A549 (cell line): ENCODE measurements at regions of chr4 and their contacts with region 1.

Region 1: DNA sequence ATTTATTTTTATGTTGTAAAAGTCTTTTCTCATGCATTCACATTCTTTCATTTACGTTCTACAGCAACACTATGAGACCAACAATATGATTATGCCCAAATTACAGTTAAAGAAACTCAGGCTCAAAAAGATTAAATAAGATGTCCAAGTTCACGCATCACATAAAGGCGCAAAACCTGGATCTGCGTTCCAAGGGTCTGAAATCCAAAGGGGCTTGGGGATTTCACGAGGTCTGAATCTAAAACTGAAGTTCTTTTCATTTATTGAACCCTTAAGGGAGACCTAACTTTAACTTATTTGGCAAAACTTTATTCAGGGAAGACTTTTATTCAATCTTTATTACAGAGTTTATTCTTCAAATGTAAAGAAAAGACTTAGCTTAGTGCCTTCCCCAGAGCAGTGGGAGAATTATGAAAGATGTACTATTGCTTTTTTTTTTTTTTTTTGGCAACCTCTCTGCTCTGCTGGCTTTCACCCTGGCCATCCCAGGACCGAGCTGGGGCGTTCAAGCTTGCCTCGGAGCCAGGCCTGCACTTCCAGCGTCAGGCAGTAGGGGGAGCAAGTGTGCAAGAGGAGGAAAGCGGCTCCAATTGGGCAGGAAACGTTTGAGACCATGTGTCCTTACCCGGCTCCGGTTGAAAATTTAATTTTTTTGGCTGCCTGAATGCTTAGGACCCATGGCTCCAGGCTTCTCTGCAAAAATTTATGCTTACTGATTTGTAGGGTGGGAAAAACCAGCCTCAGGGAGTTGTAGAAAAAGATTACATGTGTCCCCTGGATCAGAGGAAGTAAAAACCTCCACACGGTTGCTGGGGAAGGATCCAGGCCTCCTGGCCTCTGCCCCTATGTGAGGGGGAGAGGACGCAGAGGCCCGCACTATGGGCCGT is 344.3 kb upstream of the KLF3 start:
- DNase-seq: peak; percentile 71 to 85
- ATAC-seq: peak; percentile 69 to 84
- H3K4me3 ChIP-seq: no peak overlapping the region
- H3K27ac ChIP-seq: peak overlapping the region; percentile 78 to 89
- H3K4me1 ChIP-seq: peaks cover 26% of the 10 kb centered on the region
- CTCF ChIP-seq: peak; percentile 69
- EP300 ChIP-seq: no peak
- POLR2A ChIP-seq: no peak
- RAD21 ChIP-seq: peak; percentile 78 to 84

Region 2: GRCh38 chr4:37977471-37978247 is 342.0 kb before region 1 on chr4:
- CTCF ChIA-PET with region 1: no interaction called
- POLR2A ChIA-PET with region 1: no interaction called
- DNase-seq: peak; percentile 37 to 61
- ATAC-seq: peak; percentile 91 to 92
- H3K4me3 ChIP-seq: peak overlapping the region; percentile 74
- H3K27ac ChIP-seq: peak overlapping the region; percentile 71 to 96
- H3K4me1 ChIP-seq: peaks cover 10% of the 10 kb centered on the region; the same call in 2 of the 3 replicates
- CTCF ChIP-seq: peak; percentile 60
- EP300 ChIP-seq: no peak
- POLR2A ChIP-seq: no peak
- RAD21 ChIP-seq: peak; percentile 14 to 45; a peak in 3 of 5 replicates

Region 3: DNA sequence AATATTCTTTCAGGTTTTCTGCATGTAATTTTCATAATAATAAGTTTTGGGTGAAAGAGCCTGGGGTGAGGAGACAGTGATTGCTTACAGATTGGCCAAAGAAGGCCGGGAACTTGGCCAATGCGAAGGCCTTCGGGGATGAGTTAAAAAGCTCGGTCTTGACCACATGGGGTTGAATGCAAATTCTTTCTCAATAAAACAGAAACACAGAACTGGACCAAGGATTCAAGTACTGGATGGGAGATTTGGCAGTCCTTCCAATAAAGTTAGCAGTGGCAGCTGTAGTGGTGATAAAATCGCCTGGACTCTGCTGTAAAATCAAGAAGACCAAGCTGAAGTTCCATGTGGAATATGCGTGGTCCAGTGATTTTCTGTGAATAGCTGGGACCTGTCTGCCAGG is 62.1 kb after region 1 on chr4:
- CTCF ChIA-PET with region 1: no interaction called
- POLR2A ChIA-PET with region 1: interaction called, 12 read pairs
- DNase-seq: no peak
- ATAC-seq: no peak
- H3K4me3 ChIP-seq: no peak overlapping the region
- H3K27ac ChIP-seq: no peak overlapping the region
- H3K4me1 ChIP-seq: peaks cover 23% of the 10 kb centered on the region
- CTCF ChIP-seq: no peak
- EP300 ChIP-seq: no peak
- POLR2A ChIP-seq: no peak
- RAD21 ChIP-seq: no peak

Region 4: GRCh38 chr4:38654273-38654672 is 334.6 kb after region 1 on chr4:
- CTCF ChIA-PET with region 1: no interaction called
- POLR2A ChIA-PET with region 1: no interaction called
- DNase-seq: no peak
- ATAC-seq: no peak
- H3K4me3 ChIP-seq: no peak overlapping the region
- H3K27ac ChIP-seq: no peak overlapping the region
- H3K4me1 ChIP-seq: no peaks in the 10 kb centered on the region
- CTCF ChIP-seq: no peak
- EP300 ChIP-seq: no peak
- POLR2A ChIP-seq: no peak
- RAD21 ChIP-seq: no peak

Region 5: GRCh38 chr4:38667085-38667893 is 347.6 kb after region 1 on chr4:
- CTCF ChIA-PET with region 1: interaction called, 24 read pairs
- POLR2A ChIA-PET with region 1: interaction called, 21 read pairs
- DNase-seq: peak; percentile 89 to 97
- ATAC-seq: peak; percentile 65 to 86
- H3K4me3 ChIP-seq: peak overlapping the region; percentile 98
- H3K27ac ChIP-seq: peak overlapping the region; percentile 99
- H3K4me1 ChIP-seq: peaks cover 53% of the 10 kb centered on the region
- CTCF ChIP-seq: no peak
- EP300 ChIP-seq: peak; percentile 68 to 73; a peak in 3 of 5 replicates
- POLR2A ChIP-seq: no peak
- RAD21 ChIP-seq: no peak

Region 6: DNA sequence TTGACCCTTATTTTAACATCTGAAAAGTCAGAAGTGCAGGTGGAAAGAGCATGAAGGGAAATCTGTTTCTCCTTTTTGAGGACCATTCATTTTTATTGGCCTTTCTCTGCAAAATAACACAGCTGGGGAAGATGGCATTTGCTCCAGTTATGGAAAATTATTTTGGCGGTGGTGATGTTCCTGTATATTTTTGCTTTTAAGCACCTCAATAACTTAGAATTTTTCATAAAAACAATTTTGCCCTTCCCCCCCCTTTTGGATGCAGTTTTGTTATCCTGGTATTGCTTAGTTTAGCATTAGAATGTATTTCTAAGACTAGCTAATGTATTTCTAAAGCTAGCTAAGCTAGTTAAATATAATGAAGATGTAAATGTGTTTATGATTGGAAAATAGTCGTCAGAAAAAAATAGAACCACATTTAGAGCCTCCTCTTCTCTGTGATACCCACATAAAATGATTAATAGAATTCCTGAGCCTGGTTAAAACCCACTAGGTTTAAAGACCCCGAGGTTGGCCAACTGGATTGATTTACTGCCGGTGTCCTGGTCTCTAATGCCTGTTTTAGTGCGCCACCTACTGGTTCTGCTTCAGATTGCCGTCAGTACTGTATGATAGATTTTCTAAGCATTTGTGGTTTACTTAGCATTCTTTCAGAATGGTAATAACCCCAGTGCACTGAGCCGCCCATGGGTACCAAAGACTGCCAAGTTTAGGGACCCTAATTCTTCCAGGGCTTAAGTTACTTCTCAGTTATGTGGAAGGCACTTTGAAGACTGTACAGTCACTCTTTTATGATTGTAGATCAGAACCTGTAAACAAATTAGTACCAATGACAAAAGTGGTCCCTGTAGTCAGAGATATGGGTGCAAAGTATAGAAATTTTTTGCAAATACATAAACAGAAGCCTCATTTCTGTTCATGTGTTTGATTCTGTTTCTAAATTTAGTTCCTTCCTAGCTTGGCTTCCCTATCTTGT is 355.7 kb after region 1 on chr4:
- CTCF ChIA-PET with region 1: interaction called, 24 read pairs
- POLR2A ChIA-PET with region 1: interaction called, 4 read pairs
- DNase-seq: peak; percentile 36 to 73
- ATAC-seq: peak; percentile 57 to 66; a peak in 5 of 6 replicates
- H3K4me3 ChIP-seq: peak overlapping the region; percentile 2; the same call in 1 of the 3 replicates
- H3K27ac ChIP-seq: peak overlapping the region; percentile 77 to 91
- H3K4me1 ChIP-seq: peaks cover 58% of the 10 kb centered on the region
- CTCF ChIP-seq: peak; percentile 84
- EP300 ChIP-seq: no peak
- POLR2A ChIP-seq: no peak
- RAD21 ChIP-seq: peak; percentile 88 to 91